Naive thymus-derived CD8-positive, alpha-beta T cell (primary cell): ENCODE measurements at regions of chr15 and their contacts with region 1.

Region 1: GRCh38 chr15:63504247-63504978 is at the start of gene USP3:
- DNase-seq: peak; percentile 90 to 96 (median 94)
- ATAC-seq: peak; percentile 54 to 69
- H3K4me3 Mint-ChIP-seq: peak within 1 kb of the TSS; percentile 91 to 99 (median 96)
- H3K27ac Mint-ChIP-seq: peak within 1 kb of the TSS; percentile 89 to 100 (median 99)
- H3K4me1 Mint-ChIP-seq: peaks cover 41 to 82% (median 76%) of the 10 kb centered on the region in 4 donors
- H3K27me3 Mint-ChIP-seq: no peaks in the 10 kb centered on the region
- polyA plus RNA-seq, gene USP3: 31.6 to 42.9 (median 36.9) TPM

Region 2: GRCh38 chr15:63436872-63437375 is 67.5 kb before region 1 on chr15:
- POLR2A ChIA-PET with region 1: interaction called, 14 read pairs
- DNase-seq: peak; percentile 71 to 94 (median 83)
- ATAC-seq: peak; percentile 95 to 98
- H3K4me3 Mint-ChIP-seq: peak overlapping the region; percentile 3 to 91 (median 59)
- H3K27ac Mint-ChIP-seq: peak overlapping the region; percentile 81 to 99 (median 96)
- H3K4me1 Mint-ChIP-seq: peaks cover 15 to 56% (median 38%) of the 10 kb centered on the region in 4 donors
- H3K27me3 Mint-ChIP-seq: no peaks in the 10 kb centered on the region

Region 3: DNA sequence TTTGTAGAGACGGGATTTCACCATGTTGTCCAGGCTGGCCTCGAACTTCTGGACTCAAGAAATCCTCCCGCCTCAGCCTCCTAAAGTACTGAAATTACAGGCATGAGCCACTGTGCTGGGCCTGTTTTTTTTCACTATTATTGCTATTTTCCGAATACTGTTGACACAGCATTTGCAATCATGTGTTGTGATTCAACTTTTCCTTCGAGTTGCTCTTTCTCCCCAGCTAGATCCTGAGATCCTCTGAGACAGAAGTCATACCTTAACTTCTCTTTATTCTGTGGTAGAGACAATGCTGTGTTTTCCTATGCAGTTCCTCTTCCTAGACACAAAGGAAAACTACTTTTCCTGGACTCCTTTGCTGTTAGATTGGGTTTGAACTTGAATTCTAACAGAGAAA is 46.4 kb before region 1 on chr15:
- POLR2A ChIA-PET with region 1: interaction called, 14 read pairs
- DNase-seq: no peak
- ATAC-seq: no peak
- H3K4me3 Mint-ChIP-seq: no peak overlapping the region
- H3K27ac Mint-ChIP-seq: peak overlapping the region in 1 of 10 donors; percentile 13
- H3K4me1 Mint-ChIP-seq: peaks cover 2 to 9% (median 5%) of the 10 kb centered on the region in 4 donors
- H3K27me3 Mint-ChIP-seq: peaks cover 0 to 3% (median 0%) of the 10 kb centered on the region in 5 donors

Region 4: DNA sequence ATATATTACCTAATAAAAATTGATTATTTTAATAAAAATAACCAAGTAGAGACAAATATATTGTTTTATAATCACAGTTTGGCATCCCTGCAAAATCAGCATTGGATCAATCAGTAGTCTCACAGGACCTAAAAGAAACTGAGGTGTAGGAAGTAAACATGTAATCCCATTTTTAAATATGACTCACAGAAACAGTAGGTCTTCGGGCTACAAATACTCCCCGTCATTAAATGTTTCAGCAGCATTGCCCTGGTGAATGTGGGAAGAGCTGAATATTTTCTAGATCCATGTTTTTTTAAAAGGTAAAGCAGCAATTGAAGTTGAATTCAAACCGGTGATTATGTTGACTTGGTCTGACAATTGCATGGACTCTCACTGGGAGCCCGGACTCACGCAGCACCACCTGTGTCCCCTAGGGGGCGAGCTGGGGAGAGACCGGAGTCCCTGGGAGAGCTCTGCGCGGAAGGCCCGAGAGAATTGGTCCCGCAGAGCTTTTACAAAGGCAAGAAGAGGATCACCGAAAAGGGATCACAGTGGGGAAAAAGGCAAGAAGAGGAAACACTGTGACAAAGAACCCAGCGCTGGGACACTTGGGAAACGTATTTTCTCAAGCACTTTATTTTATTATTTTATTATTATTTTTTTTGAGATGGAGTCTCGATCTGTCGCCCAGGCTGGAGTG is 17.2 kb before region 1 on chr15:
- POLR2A ChIA-PET with region 1: interaction called, 629 read pairs
- DNase-seq: peak; percentile 73 to 94 (median 85)
- ATAC-seq: peak; percentile 88 to 94
- H3K4me3 Mint-ChIP-seq: peak overlapping the region; percentile 29 to 82 (median 69)
- H3K27ac Mint-ChIP-seq: peak overlapping the region; percentile 77 to 96 (median 88)
- H3K4me1 Mint-ChIP-seq: peaks cover 20 to 84% (median 64%) of the 10 kb centered on the region in 4 donors
- H3K27me3 Mint-ChIP-seq: no peaks in the 10 kb centered on the region

Region 5: GRCh38 chr15:63514531-63514943 is 10.1 kb after region 1 on chr15:
- POLR2A ChIA-PET with region 1: interaction called, 16 read pairs
- DNase-seq: no peak
- ATAC-seq: peak in 1 of 2 donors; percentile 17
- H3K4me3 Mint-ChIP-seq: peak overlapping the region; percentile 4 to 75 (median 60)
- H3K27ac Mint-ChIP-seq: peak overlapping the region in 9 of 10 donors; percentile 40 to 88 (median 61)
- H3K4me1 Mint-ChIP-seq: peaks cover 43 to 95% (median 87%) of the 10 kb centered on the region in 4 donors
- H3K27me3 Mint-ChIP-seq: no peaks in the 10 kb centered on the region

Region 6: GRCh38 chr15:63600616-63601025 is 96.2 kb after region 1 on chr15:
- POLR2A ChIA-PET with region 1: interaction called, 42 read pairs
- DNase-seq: peak; percentile 86 to 95 (median 89)
- ATAC-seq: peak; percentile 76 to 78
- H3K4me3 Mint-ChIP-seq: peak overlapping the region; percentile 88 to 98 (median 94)
- H3K27ac Mint-ChIP-seq: peak overlapping the region; percentile 85 to 99 (median 96)
- H3K4me1 Mint-ChIP-seq: peaks cover 28 to 70% (median 67%) of the 10 kb centered on the region in 4 donors
- H3K27me3 Mint-ChIP-seq: no peaks in the 10 kb centered on the region

Region 7: DNA sequence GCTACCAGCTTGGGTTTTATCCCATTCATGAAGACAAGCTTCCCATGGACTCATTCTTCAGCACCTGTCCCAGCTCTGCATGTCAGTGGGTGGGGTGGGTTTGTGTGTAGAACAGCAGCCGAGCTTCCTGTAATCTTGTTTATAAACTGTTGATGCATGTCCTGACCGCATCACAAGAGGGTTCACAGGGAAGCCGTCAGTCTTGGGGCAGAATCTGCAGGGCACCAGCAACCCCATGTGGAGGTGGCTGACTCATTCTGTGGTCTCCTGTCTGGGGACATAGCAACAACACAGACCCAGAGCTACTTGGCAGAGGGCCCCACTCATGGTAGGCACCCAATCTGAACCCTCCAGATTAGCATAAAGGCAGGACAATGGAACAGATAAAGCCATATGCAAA is 506.3 kb after region 1 on chr15:
- POLR2A ChIA-PET with region 1: no interaction called
- DNase-seq: peak; percentile 57 to 96 (median 87)
- ATAC-seq: peak; percentile 94 to 99
- H3K4me3 Mint-ChIP-seq: peak overlapping the region; percentile 43 to 83 (median 74)
- H3K27ac Mint-ChIP-seq: peak overlapping the region; percentile 95 to 99 (median 98)
- H3K4me1 Mint-ChIP-seq: peaks cover 17 to 70% (median 34%) of the 10 kb centered on the region in 4 donors
- H3K27me3 Mint-ChIP-seq: no peaks in the 10 kb centered on the region

Region 8: DNA sequence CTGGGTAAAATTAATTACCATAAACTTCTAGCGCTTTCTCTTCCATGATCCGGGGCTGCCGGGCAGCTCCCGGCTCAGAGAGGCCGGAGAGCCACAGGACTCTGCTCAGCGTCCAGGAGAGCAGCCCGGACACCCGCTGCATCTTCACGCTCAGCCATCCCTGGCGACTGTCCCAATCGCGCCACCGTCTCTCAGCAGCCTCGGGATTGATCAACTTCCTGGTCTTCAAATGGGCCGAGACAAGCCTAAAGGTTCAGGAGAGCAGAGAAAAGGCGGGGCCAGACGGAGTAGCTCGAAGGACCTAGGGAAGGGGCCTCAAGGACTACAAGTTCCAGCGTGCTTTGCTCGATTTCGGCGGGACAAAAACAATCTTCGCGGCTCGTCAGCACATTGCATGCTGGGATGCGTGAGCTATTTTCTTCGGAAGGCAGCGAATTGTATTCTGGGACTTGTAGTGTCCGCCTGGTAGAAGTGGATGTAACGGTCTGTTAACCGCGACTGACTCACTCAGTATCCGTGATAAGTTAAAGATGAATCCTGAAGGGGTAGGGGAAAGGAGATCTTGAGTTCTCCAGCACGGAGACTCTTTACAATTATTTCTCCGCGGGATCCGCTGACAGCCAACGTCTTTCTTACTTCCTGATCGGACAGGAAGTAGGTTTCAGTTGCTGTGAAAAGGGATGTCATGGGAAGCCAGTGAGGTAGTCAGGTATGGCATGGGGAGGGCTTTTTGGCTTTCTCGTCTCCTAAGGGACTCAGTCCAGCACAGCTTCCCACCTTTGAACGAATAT is 589.4 kb after region 1 on chr15 and contains the start of gene CIAO2A:
- POLR2A ChIA-PET with region 1: interaction called, 10 read pairs
- DNase-seq: peak; percentile 69 to 95 (median 88)
- ATAC-seq: peak; percentile 69 to 72
- H3K4me3 Mint-ChIP-seq: peak within 1 kb of the TSS; percentile 93 to 100 (median 97)
- H3K27ac Mint-ChIP-seq: peak within 1 kb of the TSS; percentile 94 to 100 (median 100)
- H3K4me1 Mint-ChIP-seq: peaks cover 42 to 89% (median 80%) of the 10 kb centered on the region in 4 donors
- H3K27me3 Mint-ChIP-seq: no peaks in the 10 kb centered on the region
- polyA plus RNA-seq, gene CIAO2A: 54.8 to 84.8 (median 64.9) TPM